ENCODE measurements at regions of chr9 and their contacts with region 1.

Region 1: DNA sequence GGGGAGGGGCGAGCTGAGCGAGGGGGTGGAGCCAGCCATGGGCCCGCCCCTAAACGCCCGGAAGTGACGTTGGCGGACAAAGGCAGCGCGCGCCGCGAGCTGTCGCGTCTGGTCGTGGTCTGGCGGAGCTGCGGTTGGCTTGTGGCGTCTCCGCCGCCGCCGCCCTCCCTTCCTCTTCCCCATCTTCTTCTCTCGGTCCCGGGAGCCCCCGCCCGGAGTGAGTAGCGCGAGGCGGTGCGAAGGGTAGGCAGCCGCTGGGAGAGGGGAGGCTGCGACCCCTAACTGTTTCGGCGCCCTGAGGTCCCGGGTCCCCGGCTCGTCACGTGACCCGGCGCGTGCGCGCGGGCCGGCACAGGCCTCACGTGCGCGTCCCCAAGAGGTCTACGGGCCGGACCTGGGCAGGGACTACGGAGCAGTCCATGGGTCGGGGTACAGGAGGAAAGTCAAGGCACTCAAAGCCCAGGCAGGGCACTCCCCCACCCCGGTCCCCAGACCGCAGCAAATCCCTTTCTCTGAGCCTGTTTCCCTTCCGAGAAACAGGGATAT is at the start of gene NTMT1:
- DNase-seq: peak; percentile 90

Region 2: DNA sequence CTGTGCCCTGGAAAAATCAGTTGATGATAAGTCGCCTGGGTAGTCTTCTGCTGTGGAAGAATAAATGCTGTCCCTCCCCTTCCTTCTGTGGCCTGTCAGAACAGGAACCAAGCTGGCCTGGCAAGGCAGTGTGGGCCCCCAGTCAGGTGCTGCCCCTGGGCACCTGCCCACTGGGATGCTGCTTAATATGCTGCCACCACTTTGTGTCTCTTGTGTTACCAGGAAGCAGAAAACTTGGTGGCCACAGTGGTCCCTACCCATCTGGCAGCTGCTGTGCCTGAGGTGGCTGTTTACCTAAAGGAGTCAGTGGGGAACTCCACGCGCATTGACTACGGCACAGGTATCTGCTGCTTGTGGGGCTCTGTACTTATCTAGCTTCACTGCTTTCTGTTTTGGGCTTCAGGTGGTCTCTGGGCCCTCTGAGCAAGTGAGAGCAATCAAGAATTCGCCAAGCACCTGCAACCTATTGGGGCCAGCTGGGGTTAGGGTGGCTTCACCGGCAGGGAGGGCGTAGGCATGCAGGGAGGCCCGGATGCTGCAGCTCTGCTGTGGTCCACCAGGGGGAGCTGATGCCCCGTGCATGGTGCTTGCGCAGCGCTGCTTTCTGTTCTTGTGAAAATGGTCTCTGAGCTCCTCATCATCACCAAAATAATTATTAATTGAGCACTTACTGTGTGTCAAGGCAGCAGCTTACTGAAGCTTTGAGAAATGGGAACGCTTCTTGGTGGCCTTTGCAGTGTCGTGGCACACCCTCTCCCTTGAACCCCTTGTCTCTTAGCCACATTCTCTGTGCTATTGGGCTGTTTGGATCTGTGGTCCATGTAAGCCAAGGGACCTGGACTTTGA is 494.6 kb before region 1 on chr9:
- CTCF ChIA-PET with region 1: interaction called, 17 read pairs
- POLR2A ChIA-PET with region 1: interaction called, 4 read pairs
- DNase-seq: peak; percentile 85

Region 3: GRCh38 chr9:129139993-129140396 is 486.2 kb before region 1 on chr9:
- CTCF ChIA-PET with region 1: interaction called, 12 read pairs
- POLR2A ChIA-PET with region 1: interaction called, 13 read pairs
- DNase-seq: peak; percentile 85

Region 4: GRCh38 chr9:129177791-129178559 is 448.2 kb before region 1 on chr9 and contains the start of gene IER5L:
- CTCF ChIA-PET with region 1: interaction called, 12 read pairs
- POLR2A ChIA-PET with region 1: interaction called, 4 read pairs
- DNase-seq: peak; percentile 97

Region 5: DNA sequence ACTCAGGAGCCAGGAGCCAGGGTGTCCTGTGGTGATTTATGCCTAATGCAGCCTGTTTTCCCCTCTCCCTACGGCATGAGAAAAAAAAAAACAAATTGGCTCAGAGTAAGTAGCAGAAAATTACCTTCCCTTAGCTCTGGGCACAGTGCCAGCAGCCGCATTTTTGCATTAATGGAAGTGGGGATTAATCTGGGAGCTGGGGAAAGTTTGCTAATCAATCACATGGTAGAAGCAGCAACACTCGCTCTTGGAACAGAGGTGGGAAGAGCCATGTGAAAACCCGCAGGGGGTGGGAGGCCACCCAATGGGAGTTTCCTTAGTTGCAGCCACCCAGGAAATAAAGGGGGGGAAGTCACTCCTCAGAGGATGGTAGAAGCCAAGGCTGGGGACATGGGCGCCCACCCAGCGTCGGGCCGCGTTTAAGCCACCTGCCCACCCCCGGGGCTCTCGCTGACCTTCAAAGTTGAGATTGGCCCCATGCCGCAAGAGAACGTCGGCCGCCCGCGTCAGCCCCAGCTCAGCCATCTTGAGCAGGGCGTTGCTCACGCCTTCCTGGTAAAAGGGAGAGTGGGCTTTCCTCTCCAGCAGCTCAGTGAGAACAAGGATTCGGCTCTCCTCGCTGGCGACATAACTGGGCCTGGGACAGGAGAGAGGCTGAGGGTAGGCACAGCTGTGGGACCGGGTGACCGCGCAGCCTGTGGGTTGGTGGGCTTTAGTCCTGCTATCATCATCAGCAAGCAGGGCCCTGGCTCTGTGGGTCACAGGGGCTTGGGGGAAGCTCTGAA is 14.1 kb after region 1 on chr9:
- CTCF ChIA-PET with region 1: interaction called, 11 read pairs
- POLR2A ChIA-PET with region 1: interaction called, 6 read pairs
- DNase-seq: no peak

Measured in HEK293T (cell line).